PC-9 (cell line): ENCODE measurements at regions of chr6 and their contacts with region 1.

Region 1: DNA sequence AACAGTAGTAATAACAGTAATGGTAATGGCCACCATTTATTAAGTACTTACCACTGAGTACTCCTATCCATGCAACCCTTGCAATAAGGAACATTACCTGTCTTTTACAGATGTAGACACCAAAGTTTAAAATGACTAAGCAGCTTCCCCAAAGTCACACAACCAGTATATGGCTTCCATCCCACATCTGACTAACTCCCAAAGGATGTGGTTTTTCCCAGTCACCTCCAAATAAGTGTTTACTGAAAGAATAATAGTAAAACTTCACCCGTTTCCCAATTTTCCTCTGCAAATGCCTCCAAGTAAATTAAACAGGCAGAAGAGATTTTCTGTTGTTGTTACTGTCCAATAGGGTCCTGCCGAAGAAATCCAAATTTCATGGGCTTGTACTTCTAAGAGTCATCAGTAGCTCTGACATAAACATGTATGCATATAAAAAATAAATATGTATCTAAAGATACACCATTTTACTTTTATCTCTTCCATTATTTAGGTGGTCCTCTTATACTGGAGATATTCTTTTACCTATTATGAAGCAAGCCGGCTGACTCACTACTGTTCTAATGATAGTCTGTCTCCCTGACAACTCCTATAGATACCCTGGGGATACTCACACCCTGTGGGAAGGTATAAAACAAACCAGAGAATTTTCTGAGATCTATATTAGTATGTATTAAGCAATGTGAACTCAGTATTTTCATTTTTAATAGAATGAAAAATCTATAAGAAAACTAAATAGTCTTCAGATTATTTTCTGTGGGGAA is 77.9 kb upstream of the ID4 start:
- DNase-seq: peak; percentile 14 to 46
- H3K4me3 ChIP-seq: no peak overlapping the region
- H3K27ac ChIP-seq: no peak overlapping the region
- H3K4me1 ChIP-seq: peaks cover 11% of the 10 kb centered on the region; the same call in 1 of the 2 replicates
- H3K27me3 ChIP-seq: no peaks in the 10 kb centered on the region
- CTCF ChIP-seq: no peak

Region 2: DNA sequence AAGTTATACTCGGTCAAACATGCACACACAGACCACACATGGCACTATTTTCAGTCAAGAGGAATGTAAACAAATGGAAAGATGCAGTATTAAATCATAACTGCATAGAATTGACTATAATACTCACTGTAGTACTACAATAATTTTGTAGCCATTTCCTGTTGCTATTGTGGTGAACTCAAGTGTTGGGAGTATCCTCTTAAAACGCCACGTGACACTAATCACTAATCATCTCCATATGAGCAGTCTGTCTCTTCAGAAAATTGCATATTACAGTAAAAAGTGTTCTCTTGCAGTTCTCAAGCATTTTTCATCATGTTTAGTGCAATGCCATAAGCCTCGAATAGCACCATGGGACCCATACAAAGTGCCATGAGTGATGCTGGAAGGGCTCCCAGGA is 180.8 kb before region 1 on chr6:
- CTCF ChIA-PET with region 1: no interaction called
- POLR2A ChIA-PET with region 1: no interaction called
- intact Hi-C with region 1: no loop called
- DNase-seq: no peak
- H3K4me3 ChIP-seq: no peak overlapping the region
- H3K27ac ChIP-seq: no peak overlapping the region
- H3K4me1 ChIP-seq: no peaks in the 10 kb centered on the region
- H3K27me3 ChIP-seq: no peaks in the 10 kb centered on the region
- CTCF ChIP-seq: no peak

Region 3: GRCh38 chr6:19682859-19683258 is 76.4 kb before region 1 on chr6:
- CTCF ChIA-PET with region 1: no interaction called
- POLR2A ChIA-PET with region 1: no interaction called
- intact Hi-C with region 1: no loop called
- DNase-seq: no peak
- H3K4me3 ChIP-seq: no peak overlapping the region
- H3K27ac ChIP-seq: no peak overlapping the region
- H3K4me1 ChIP-seq: no peaks in the 10 kb centered on the region
- H3K27me3 ChIP-seq: no peaks in the 10 kb centered on the region
- CTCF ChIP-seq: no peak

Region 4: GRCh38 chr6:19836799-19837510 is 77.7 kb after region 1 on chr6 and contains the start of gene ID4:
- CTCF ChIA-PET with region 1: no interaction called
- POLR2A ChIA-PET with region 1: interaction called, 12 read pairs
- intact Hi-C with region 1: no loop called
- DNase-seq: peak in 1 of 2 experiments; percentile 83
- H3K4me3 ChIP-seq: peak within 1 kb of the TSS; percentile 66
- H3K27ac ChIP-seq: no peak within 1 kb of the TSS
- H3K4me1 ChIP-seq: peaks cover 13% of the 10 kb centered on the region
- H3K27me3 ChIP-seq: peaks cover 17% of the 10 kb centered on the region
- CTCF ChIP-seq: no peak
- total RNA-seq, gene ID4: 4.4 and 5.9 TPM in 2 replicates